Left cardiac atrium (tissue), 4 donors: ENCODE measurements at regions of chr18 and their contacts with region 1.

Region 1: GRCh38 chr18:65769653-65770052 is 18.8 kb downstream of the CDH7 start:
- DNase-seq: no peak
- ATAC-seq: no peak

Region 2: DNA sequence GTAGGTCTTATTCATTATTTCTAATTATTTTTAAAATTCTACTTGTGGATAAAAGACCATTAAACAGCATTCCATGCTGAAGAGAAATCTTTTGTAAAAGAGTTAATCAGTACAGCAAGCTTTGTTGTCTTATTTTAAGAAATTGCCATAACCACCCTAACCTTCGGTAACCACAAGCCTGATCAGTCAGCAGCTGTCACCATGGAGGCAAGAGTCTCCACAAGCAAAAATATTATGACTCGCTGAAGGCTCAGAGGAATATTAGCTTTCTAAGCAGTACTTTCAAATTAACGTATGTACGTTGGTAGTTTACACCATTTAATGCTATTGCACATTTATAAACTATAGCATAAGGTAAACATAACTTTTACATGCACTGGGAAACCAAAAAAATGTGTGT is 970.3 kb before region 1 on chr18:
- intact Hi-C with region 1: no loop called
- DNase-seq: no peak
- ATAC-seq: no peak

Region 3: GRCh38 chr18:65792461-65793074 is 22.9 kb after region 1 on chr18:
- intact Hi-C with region 1: loop called in 1 of 2 experiments (anchors 2 kb)
- DNase-seq: no peak
- ATAC-seq: no peak